Heart left ventricle (tissue), 16 donors: ENCODE measurements at regions of chr20 and their contacts with region 1.

Region 1: GRCh38 chr20:805713-806112 is 27.8 kb upstream of the FAM110A start:
- DNase-seq: no peak
- ATAC-seq: no peak
- H3K4me3 ChIP-seq: no peak overlapping the region
- H3K27ac ChIP-seq: no peak overlapping the region
- H3K4me1 ChIP-seq: no peaks in the 10 kb centered on the region
- H3K27me3 ChIP-seq: peaks cover 0 to 24% (median 6%) of the 10 kb centered on the region in 9 donors
- CTCF ChIP-seq: no peak
- POLR2A ChIP-seq: no peak

Region 2: DNA sequence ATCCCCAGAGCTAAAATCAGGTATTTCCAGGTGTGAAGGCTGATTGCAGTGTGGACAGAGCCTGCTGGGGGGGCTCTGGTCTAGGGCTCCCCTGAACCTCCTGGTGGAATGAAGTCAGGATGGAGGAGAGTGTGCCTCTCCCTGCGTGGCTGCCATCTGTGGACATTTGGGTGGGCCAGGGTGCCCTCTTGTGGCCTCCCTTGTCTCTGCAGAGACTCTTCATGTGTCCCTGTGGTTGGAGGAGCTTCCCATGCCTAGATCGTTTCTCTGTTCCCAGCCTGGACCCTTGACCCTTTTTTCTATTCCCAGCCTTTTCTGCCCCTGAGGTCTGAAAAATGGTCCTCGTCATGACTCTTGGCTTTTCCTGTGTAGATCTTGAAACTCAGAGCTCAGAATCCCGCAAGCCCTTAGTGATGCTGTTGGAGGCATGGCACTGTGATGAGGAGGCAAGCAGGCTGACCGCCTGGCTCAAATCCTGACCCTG is 302.8 kb after region 1 on chr20:
- intact Hi-C with region 1: loop called in 3 of 10 experiments (anchors 5 to 10 kb)
- DNase-seq: peak; percentile 27 to 70 (median 42)
- ATAC-seq: peak in 3 of 4 donors; percentile 75 to 80 (median 76)
- H3K4me3 ChIP-seq: no peak overlapping the region
- H3K27ac ChIP-seq: no peak overlapping the region
- H3K4me1 ChIP-seq: peaks cover 0 to 4% (median 0%) of the 10 kb centered on the region in 12 donors
- H3K27me3 ChIP-seq: no peaks in the 10 kb centered on the region
- CTCF ChIP-seq: peak; percentile 61 to 83 (median 73)
- POLR2A ChIP-seq: no peak

Region 3: GRCh38 chr20:1466211-1467081 is 660.7 kb after region 1 on chr20 and contains the start of gene NSFL1C:
- intact Hi-C with region 1: loop called in 1 of 10 experiments (anchors 10 kb)
- DNase-seq: peak; percentile 95 to 97 (median 97)
- ATAC-seq: peak; percentile 90 to 98 (median 96)
- H3K4me3 ChIP-seq: peak within 1 kb of the TSS; percentile 73 to 99 (median 92)
- H3K27ac ChIP-seq: peak within 1 kb of the TSS; percentile 80 to 96 (median 89)
- H3K4me1 ChIP-seq: peaks cover 5 to 69% (median 28%) of the 10 kb centered on the region in 12 donors
- H3K27me3 ChIP-seq: no peaks in the 10 kb centered on the region
- CTCF ChIP-seq: peak in 11 of 12 donors; percentile 88 to 100 (median 98)
- POLR2A ChIP-seq: peak in 1 of 2 donors; percentile 65
- total RNA-seq, gene NSFL1C: 27.9 to 66.6 (median 62.1) TPM